Ascending aorta (tissue), 2 donors: ENCODE measurements at regions of chr13 and their contacts with region 1.

Region 1: GRCh38 chr13:75549262-75550158 is at the start of gene UCHL3:
- DNase-seq: peak; percentile 82 to 97
- H3K4me3 ChIP-seq: peak within 1 kb of the TSS; percentile 74 to 94
- H3K27ac ChIP-seq: peak within 1 kb of the TSS; percentile 70 to 81
- H3K4me1 ChIP-seq: peaks cover 0 to 4% of the 10 kb centered on the region in 2 donors
- H3K27me3 ChIP-seq: no peaks in the 10 kb centered on the region
- CTCF ChIP-seq: peak; percentile 82 to 93 (median 91)
- total RNA-seq, gene UCHL3: not detected

Region 2: DNA sequence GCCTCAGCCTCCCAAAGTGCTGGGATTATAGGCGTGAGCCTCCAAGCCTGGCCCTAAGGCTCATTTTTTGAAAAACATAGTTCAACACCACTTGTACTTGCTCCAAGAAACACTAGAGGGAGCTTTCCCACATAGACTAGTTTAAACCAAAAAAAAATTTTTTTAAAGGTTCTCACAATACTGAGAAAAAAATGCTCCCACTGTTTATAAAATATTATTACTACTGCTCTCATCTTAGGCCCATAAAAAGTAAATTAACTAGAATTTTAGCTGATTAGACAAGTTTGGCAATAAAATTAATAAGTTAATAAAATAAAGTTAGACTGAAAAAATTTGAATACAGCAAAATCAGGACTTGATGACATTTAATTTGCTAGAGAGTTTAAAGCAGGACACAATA is 177.0 kb before region 1 on chr13:
- intact Hi-C with region 1: loop called (anchors 5 kb)
- DNase-seq: no peak
- H3K4me3 ChIP-seq: no peak overlapping the region
- H3K27ac ChIP-seq: no peak overlapping the region
- H3K4me1 ChIP-seq: no peaks in the 10 kb centered on the region
- H3K27me3 ChIP-seq: no peaks in the 10 kb centered on the region
- CTCF ChIP-seq: peak; percentile 49 to 73 (median 72)

Region 3: GRCh38 chr13:75482070-75482819 is 67.3 kb before region 1 on chr13 and contains the start of gene TBC1D4:
- intact Hi-C with region 1: loop called (anchors 2 kb)
- DNase-seq: peak; percentile 28 to 92
- H3K4me3 ChIP-seq: peak within 1 kb of the TSS; percentile 91 to 95
- H3K27ac ChIP-seq: peak within 1 kb of the TSS; percentile 56 to 62
- H3K4me1 ChIP-seq: no peaks in the 10 kb centered on the region
- H3K27me3 ChIP-seq: no peaks in the 10 kb centered on the region
- CTCF ChIP-seq: peak; percentile 59 to 90 (median 81)
- total RNA-seq, gene TBC1D4: 9.5 TPM

Region 4: DNA sequence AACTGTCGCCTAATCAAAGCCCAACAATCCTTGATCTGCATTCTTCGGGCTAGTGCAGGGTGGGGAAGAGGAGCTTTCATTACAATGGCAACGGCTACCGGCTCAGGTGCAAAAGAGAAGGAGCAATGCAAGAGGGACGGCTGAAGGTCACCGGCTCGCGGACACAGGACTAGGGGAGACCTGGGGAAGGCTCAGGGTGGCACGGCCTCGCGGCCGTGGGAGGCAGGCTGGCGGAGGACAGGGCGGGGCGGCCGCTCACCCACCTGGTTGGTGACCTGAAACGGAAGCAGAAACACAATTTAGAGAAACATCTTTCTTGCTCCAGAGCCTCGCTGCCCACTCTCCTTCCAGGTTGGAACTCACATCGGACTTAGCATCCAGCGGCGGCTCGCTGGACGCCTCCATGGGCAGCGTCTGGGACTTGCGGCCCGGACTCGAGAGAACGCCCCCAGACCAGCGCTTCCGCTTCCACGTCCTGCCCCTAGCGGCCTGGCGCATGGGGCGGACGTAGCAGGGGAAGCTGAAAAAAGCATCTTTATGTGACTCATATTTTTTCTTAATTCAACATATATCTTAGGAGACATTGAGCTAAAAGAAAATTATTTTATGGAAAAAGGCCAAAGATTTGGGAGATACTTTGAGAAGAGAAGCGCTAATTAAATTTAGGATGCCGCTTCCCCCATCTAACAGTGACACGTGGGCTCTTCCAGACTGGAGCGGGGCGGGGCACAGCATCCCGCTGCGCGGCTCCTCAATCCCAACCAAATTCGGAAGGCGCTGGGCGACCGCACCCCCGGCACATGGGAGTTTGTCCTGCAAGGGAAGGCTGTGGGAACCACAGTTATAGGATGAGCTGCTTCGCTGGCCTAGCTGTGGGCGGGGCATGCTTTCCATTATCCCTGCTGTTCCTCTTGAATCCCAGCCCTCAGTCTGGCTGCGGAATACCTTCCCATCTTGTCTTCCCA is 11.8 kb before region 1 on chr13 and contains the start of gene COMMD6:
- intact Hi-C with region 1: loop called (anchors 1 kb)
- DNase-seq: peak in 1 of 2 donors; percentile 87
- H3K4me3 ChIP-seq: peak within 1 kb of the TSS; percentile 88 to 99
- H3K27ac ChIP-seq: peak within 1 kb of the TSS; percentile 79 to 85
- H3K4me1 ChIP-seq: peaks cover 6% of the 10 kb centered on the region in 2 donors
- H3K27me3 ChIP-seq: no peaks in the 10 kb centered on the region
- CTCF ChIP-seq: peak; percentile 45 to 61 (median 58)
- total RNA-seq, gene COMMD6: 36.2 TPM

Region 5: DNA sequence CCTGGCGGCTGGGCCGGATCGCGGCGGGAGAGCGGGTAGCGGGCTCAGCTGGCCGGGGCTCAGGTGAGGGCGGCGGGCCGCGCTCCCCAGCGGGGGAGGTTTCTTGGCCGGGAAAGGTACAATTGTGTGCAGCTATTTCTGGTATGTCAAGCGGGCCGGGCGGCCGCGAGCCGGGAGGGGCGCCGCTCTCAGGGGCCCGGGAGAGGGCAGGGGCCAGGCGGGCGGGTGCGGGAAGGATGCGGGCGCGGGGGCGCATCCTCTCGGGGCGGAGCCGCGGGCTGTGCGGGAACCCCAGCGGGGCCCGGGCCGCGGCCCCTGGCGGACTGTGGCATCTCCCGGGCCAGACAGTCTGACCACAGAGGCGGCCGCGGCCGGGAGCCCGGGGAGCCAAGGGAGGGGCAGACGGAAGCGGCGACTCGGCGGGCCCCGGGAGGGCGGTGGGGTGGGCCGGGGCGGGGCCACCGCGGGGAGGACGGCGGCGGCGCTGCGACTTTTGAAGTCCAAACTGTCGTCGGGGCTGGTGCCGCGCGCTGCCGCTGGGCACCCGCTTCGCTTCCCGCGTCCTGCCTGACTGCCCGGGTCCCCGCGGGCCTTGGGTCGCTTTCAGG is 86.4 kb after region 1 on chr13 and contains the start of gene LMO7:
- intact Hi-C with region 1: loop called (anchors 2 kb)
- DNase-seq: peak in 1 of 2 donors; percentile 81
- H3K4me3 ChIP-seq: peak within 1 kb of the TSS; percentile 74 to 87
- H3K27ac ChIP-seq: peak within 1 kb of the TSS; percentile 73 to 85
- H3K4me1 ChIP-seq: no peaks in the 10 kb centered on the region
- H3K27me3 ChIP-seq: no peaks in the 10 kb centered on the region
- CTCF ChIP-seq: no peak
- total RNA-seq, gene LMO7: 176 TPM

Region 6: DNA sequence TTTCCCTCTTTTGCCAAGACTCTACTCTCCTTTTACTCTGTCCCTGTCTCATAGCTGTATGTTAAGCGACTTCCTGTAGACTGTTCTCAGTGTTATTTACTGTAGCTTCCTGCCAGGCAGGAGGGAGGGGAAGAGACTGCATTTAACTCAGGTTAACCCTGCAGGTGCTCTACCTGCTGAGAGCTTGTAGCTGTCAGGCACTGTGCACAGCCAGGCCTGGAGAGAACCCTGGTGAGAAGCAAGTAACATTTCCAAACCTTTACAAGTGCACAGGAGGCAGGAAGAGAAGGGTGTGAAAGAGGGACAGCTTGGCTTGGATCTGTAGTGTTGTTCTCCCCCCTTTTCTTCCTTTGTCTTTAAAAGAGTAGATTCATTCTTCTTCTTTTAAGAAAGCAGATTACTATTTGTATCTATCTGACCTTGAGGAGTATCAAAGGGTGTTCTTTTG is 253.7 kb after region 1 on chr13:
- intact Hi-C with region 1: loop called (anchors 10 kb)
- DNase-seq: no peak
- H3K4me3 ChIP-seq: peak overlapping the region in 1 of 2 donors; percentile 63
- H3K27ac ChIP-seq: peak overlapping the region; percentile 86 to 88
- H3K4me1 ChIP-seq: peaks cover 3 to 10% of the 10 kb centered on the region in 2 donors
- H3K27me3 ChIP-seq: no peaks in the 10 kb centered on the region
- CTCF ChIP-seq: no peak

Region 7: DNA sequence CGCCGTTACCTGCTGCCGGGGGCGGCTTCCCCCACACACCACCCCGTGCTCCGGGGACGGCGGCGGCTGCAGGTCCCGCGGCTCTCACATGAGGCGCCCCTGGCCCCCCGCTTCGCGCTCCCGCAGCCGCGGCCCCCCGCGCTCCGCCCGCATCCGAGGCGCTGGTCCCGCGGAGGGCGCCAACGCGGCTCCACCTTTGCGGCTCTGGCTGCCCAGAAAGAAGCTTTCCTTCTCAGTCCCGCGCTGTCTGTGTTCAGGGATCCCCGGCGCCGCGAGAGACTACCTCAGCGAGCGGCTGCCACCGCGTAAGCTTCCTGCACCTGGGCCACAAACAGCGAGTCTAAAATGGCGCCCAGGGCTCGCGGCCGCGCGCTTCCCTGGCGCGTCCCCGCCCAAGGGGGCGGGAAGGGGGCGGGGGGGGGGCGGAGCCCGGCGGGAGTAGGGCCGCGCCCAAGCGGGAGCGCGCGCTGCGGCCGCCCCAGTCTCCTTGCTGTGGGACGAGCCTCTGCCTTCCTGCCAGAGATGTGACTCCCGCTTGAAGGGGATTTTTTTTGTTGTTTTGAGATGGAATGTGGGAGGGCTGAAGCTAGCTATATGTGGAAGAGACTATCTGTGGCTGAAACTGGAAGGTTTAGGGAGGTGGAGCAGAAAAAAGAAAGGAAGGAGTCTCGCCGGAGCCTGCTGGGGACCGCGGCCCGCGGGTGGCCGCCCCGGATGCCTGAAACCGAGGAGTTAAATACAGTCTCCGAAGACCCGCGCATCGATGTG is 1477.5 kb after region 1 on chr13 and contains the start of gene FBXL3:
- intact Hi-C with region 1: loop called (anchors 10 kb)
- DNase-seq: peak; percentile 36 to 91
- H3K4me3 ChIP-seq: peak within 1 kb of the TSS; percentile 88 to 100
- H3K27ac ChIP-seq: peak within 1 kb of the TSS; percentile 95 to 100
- H3K4me1 ChIP-seq: peaks cover 0 to 6% of the 10 kb centered on the region in 2 donors
- H3K27me3 ChIP-seq: no peaks in the 10 kb centered on the region
- CTCF ChIP-seq: no peak
- total RNA-seq, gene FBXL3: 102 TPM